Panc1 (cell line): ENCODE measurements at regions of chr1 and their contacts with region 1.

Region 1: DNA sequence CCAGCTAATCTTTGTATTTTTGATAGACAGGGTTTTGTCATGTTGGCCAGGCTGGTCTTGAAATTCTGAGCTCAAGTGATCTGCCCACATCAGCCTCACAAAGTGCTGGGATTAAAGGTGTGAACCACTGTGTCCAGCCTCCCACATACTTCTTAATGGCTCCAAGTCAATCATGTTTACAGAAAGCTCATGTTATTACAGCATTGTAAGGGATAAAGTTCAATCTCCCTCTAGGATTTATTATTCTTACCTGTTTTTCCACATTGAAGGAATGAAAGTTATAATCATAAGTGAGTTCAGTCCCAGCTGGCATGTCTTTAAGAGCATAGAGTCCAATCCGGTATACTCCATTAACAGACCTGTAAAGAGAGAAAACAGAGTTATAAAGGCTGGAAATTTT is 39.4 kb downstream of the RUSC1 start:
- DNase-seq: no peak
- ATAC-seq: no peak
- H3K4me3 ChIP-seq: no peak overlapping the region
- H3K27ac ChIP-seq: no peak overlapping the region
- H3K4me1 ChIP-seq: no peaks in the 10 kb centered on the region
- H3K27me3 ChIP-seq: no peaks in the 10 kb centered on the region
- CTCF ChIP-seq: no peak

Region 2: GRCh38 chr1:155379631-155380090 is 19.6 kb after region 1 on chr1:
- CTCF ChIA-PET with region 1: no interaction called
- POLR2A ChIA-PET with region 1: interaction called, 11 read pairs
- in situ Hi-C with region 1: no loop called
- intact Hi-C with region 1: no loop called
- DNase-seq: no peak
- ATAC-seq: no peak
- H3K4me3 ChIP-seq: no peak overlapping the region
- H3K27ac ChIP-seq: no peak overlapping the region
- H3K4me1 ChIP-seq: no peaks in the 10 kb centered on the region
- H3K27me3 ChIP-seq: no peaks in the 10 kb centered on the region
- CTCF ChIP-seq: no peak